Activated naive CD8-positive, alpha-beta T cell treated with anti-CD3 and anti-CD28 coated beads, Interleukin-2, amount 10 ng/mL, durations not matched to agents 7 days and 5 days (primary cell): ENCODE measurements at regions of chr9 and their contacts with region 1.

Region 1: DNA sequence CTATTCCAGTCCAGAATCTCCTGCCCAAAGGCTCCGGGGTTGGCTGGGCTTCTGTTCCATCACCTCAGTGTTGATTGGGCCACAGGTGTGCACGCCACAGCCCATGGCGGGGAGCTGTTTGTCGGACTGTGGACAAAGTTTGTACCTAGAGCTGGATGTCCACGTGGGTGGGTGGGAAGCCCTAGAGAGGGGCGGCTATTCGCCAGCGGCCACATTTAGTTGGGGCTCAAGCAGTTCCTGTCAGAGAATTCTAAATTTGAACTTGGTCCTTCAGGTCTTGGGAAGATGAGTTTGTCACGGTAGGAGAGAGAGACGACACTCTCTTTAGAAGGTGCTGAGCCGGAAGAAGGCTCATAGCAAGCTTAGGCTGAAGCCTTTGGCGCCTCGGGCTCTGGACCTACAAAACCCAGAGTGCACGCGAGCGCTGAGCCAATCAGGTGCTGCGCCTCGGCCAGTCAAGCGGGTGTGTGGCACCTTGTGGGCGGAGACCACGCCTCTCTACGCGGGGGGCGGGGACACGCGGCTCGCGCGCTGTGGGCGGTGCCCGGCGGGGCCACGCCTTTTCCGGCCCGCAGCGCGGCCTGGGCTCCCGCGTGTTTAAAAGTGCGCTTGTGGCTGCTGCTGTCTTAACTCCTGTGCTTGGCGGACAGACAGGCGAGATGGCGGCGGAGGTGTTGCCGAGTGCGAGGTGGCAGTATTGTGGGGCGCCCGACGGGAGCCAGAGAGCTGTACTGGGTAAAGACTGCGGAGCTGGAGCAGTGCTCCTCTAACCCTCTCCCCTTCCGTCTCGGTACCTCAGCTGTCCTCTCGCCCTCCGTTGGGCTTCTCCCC is at the start of gene POLR1E:
- DNase-seq: peak; percentile 99
- ATAC-seq: peak; percentile 98
- H3K4me3 Mint-ChIP-seq: peak within 1 kb of the TSS; percentile 98
- H3K27ac Mint-ChIP-seq: peak within 1 kb of the TSS; percentile 96
- H3K4me1 Mint-ChIP-seq: peaks cover 27% of the 10 kb centered on the region
- H3K27me3 Mint-ChIP-seq: peaks cover 10% of the 10 kb centered on the region
- total RNA-seq, gene POLR1E: 33.0 to 36.5 TPM

Region 2: DNA sequence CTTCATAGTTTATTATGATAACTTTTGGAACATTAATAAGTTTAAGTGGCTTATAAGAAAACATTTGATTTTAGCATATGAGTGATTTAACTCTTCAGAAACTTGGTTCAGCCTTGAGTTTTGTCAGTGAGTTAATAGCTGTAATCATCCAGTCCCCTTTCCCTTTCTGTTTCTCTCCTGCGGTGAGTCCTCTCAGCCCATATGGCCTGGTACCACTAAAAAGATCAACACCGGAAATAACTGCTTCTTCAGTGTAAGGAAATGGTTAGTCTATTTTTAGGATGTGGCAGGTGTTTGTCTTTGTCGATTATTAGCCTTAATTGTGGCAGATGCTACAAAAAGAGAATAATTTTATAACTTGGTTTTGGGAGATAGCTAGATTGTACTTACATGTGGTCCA is 183.3 kb before region 1 on chr9:
- POLR2A ChIA-PET with region 1: no interaction called
- DNase-seq: no peak
- ATAC-seq: peak; percentile 92
- H3K4me3 Mint-ChIP-seq: peak overlapping the region; percentile 67
- H3K27ac Mint-ChIP-seq: peak overlapping the region; percentile 85
- H3K4me1 Mint-ChIP-seq: peaks cover 48% of the 10 kb centered on the region
- H3K27me3 Mint-ChIP-seq: no peaks in the 10 kb centered on the region

Region 3: DNA sequence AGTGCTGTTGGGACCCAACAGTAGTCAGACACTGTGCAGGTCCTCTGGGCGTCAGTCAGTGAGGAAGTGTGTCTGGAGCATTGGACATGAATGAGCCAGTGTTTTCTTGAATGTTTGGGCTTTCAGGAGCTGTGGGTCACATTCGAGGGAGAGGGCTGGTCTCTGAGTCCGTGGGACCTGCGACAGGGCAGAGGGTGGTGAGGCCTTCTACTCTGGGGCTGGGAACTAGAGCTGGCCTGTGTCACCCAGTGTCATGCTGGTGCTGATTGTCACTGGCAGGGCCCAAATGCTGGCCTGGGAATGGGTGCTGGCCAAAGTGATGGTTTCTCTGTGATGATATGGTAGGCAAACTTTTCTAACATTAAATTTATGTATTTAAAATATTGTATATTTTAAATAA is 10.4 kb after region 1 on chr9:
- POLR2A ChIA-PET with region 1: interaction called, 13 read pairs
- DNase-seq: no peak
- ATAC-seq: no peak
- H3K4me3 Mint-ChIP-seq: no peak overlapping the region
- H3K27ac Mint-ChIP-seq: no peak overlapping the region
- H3K4me1 Mint-ChIP-seq: peaks cover 2% of the 10 kb centered on the region
- H3K27me3 Mint-ChIP-seq: no peaks in the 10 kb centered on the region

Region 4: GRCh38 chr9:37511016-37512010 is 25.7 kb after region 1 on chr9:
- POLR2A ChIA-PET with region 1: no interaction called
- DNase-seq: no peak
- ATAC-seq: no peak
- H3K4me3 Mint-ChIP-seq: no peak overlapping the region
- H3K27ac Mint-ChIP-seq: peak overlapping the region; percentile 36
- H3K4me1 Mint-ChIP-seq: peaks cover 5% of the 10 kb centered on the region
- H3K27me3 Mint-ChIP-seq: no peaks in the 10 kb centered on the region